MCF 10A (cell line): ENCODE measurements at regions of chr2 and their contacts with region 1.

Region 1: DNA sequence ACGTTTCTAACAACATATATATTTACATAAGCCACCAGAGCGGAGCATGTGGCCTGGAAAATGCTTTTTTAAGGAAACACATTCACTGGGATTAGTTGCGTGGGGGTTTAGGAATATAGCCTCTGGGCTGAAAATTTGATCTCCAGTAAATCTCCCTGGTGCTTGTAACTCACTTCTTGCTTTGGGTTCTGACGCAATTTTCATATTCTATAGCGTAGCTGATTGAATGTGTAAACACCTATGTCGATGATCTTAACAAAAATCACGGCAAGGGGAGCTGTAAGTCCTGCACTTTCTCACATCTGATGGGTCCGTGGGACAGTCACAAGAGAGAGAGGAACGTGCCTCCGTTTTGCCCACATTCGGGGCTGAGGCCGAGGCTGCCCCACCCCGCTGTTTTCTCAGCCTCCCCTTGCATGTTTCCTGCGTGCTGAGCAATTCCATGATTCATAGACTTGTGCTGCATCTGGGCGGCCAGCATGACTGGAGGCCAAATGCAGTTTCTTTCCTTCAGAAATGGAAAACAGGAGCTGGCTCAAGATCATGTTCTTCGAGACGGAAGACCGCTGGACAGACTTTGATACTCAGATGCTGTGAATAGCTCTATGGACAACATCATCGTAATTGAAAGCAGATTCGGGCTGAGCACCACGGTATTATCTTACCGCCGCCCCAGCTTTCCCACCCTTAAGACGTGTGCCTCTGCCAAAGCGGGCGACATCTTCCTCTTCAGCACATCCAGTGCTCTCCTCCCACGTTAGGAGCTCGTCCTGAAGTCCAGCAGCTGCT is 109.2 kb downstream of the TMEM18 start:
- DNase-seq: peak; percentile 91
- H3K4me3 Mint-ChIP-seq: peak overlapping the region; percentile 64
- H3K27ac Mint-ChIP-seq: peak overlapping the region; percentile 90
- H3K4me1 Mint-ChIP-seq: peaks cover 21% of the 10 kb centered on the region
- H3K27me3 Mint-ChIP-seq: no peaks in the 10 kb centered on the region
- CTCF ChIP-seq: no peak

Region 2: GRCh38 chr2:529425-529824 is 38.6 kb before region 1 on chr2:
- CTCF ChIA-PET with region 1: interaction called, 16 read pairs
- POLR2A ChIA-PET with region 1: interaction called, 5 read pairs
- intact Hi-C with region 1: loop called (anchors 2 kb)
- DNase-seq: peak; percentile 50
- H3K4me3 Mint-ChIP-seq: no peak overlapping the region
- H3K27ac Mint-ChIP-seq: no peak overlapping the region
- H3K4me1 Mint-ChIP-seq: peaks cover 3% of the 10 kb centered on the region
- H3K27me3 Mint-ChIP-seq: no peaks in the 10 kb centered on the region
- CTCF ChIP-seq: peak; percentile 50

Region 3: GRCh38 chr2:535222-535621 is 32.8 kb before region 1 on chr2:
- CTCF ChIA-PET with region 1: interaction called, 16 read pairs
- POLR2A ChIA-PET with region 1: interaction called, 5 read pairs
- intact Hi-C with region 1: loop called (anchors 2 kb)
- DNase-seq: peak; percentile 19
- H3K4me3 Mint-ChIP-seq: no peak overlapping the region
- H3K27ac Mint-ChIP-seq: no peak overlapping the region
- H3K4me1 Mint-ChIP-seq: no peaks in the 10 kb centered on the region
- H3K27me3 Mint-ChIP-seq: peaks cover 19% of the 10 kb centered on the region
- CTCF ChIP-seq: peak; percentile 24

Region 4: GRCh38 chr2:557697-558642 is 10.1 kb before region 1 on chr2:
- CTCF ChIA-PET with region 1: interaction called, 6 read pairs
- POLR2A ChIA-PET with region 1: interaction called, 24 read pairs
- intact Hi-C with region 1: no loop called
- DNase-seq: no peak
- H3K4me3 Mint-ChIP-seq: no peak overlapping the region
- H3K27ac Mint-ChIP-seq: no peak overlapping the region
- H3K4me1 Mint-ChIP-seq: peaks cover 31% of the 10 kb centered on the region
- H3K27me3 Mint-ChIP-seq: peaks cover 47% of the 10 kb centered on the region
- CTCF ChIP-seq: no peak

Region 5: DNA sequence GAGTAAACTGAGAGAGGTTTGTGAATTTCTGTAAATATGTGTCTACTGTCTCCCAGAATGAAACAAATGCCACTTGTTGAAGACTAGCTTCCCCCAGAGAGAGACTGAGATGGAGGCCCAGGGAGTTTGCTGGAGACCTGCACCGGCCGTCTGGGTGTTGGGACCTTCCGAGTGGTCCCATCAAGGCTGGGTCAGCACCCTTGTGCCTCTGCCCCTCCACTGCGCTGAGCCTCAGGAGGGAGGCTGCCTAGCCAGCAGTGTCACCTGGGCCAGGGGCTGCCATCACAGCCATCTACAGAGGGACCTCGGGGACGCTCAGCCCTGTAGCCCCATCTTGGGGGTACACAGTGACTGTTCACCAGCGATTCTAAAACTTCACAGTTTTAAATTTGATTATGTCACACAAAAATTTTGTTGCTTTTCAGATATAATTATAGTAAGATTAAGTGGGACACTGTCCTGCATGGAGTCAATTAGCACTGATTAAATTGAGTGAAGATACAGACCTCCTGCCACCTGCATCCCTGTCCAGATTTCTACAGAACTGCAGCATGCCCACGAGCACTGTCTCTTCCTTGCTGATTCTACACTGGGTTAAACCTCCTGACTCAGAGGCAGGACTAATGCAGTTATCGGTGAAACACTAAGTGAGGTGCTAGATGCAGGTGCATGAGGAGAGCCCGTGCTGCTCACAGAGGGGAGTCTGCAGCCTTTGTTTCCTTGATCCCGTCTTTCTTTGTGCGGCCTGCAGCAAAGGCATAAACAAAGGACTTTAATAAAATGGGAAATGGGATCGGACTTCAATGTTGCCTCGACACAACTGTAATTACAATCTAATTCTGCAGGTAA is 58.7 kb after region 1 on chr2:
- CTCF ChIA-PET with region 1: no interaction called
- POLR2A ChIA-PET with region 1: no interaction called
- intact Hi-C with region 1: no loop called
- DNase-seq: no peak
- H3K4me3 Mint-ChIP-seq: no peak overlapping the region
- H3K27ac Mint-ChIP-seq: no peak overlapping the region
- H3K4me1 Mint-ChIP-seq: no peaks in the 10 kb centered on the region
- H3K27me3 Mint-ChIP-seq: no peaks in the 10 kb centered on the region
- CTCF ChIP-seq: no peak

Region 6: DNA sequence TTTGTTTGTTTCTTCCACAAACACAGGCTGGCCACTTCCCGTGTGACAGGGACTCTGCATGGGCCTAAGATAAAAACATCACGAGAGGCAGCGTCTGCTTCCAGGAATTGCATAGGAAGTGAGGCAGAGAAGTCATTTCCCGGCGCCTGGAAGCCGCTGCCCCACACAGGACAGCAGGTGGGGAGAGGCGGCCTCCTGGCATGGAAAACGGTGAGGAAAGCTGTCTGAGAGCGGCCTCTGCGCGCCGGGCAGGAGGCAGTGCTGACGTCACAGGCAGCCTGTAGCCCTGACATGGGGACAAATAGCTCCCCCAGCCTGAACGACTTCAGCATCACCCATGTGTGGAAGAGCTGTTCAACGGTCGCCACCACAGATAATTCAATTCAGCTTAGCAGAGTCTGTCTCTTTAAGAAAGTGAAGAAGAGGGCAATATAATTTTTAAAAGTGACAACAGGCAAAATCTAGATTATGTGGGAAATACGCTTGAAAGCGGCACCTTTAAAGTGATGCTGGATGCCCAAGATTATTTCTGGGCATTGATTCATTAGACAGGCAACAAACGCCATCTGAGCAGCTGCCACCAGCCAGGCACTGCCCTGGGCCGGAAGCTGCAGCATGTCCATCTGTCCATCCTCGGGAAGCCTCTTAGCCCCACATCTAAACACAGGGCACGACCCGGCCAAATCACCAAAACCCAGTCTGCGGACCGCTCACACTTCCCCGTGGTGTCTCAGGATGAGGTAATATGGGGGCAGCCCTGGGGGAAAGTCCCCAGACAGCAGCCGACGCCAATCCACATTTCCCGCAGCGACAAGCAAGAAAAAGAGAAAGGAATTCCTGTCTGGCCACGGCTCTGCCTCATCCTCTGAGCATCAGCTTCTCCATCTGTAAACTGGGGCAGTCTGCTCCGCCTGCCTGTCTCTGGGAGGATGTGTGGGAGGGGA is 1037.3 kb after region 1 on chr2:
- CTCF ChIA-PET with region 1: no interaction called
- POLR2A ChIA-PET with region 1: no interaction called
- intact Hi-C with region 1: no loop called
- DNase-seq: no peak
- H3K4me3 Mint-ChIP-seq: no peak overlapping the region
- H3K27ac Mint-ChIP-seq: no peak overlapping the region
- H3K4me1 Mint-ChIP-seq: peaks cover 18% of the 10 kb centered on the region
- H3K27me3 Mint-ChIP-seq: no peaks in the 10 kb centered on the region
- CTCF ChIP-seq: no peak